Heart left ventricle (tissue), 16 donors: ENCODE measurements at regions of chr15 and their contacts with region 1.

Region 1: GRCh38 chr15:74322181-74323076 is 45.0 kb downstream of the CYP11A1 start:
- DNase-seq: peak; percentile 55 to 83 (median 68)
- ATAC-seq: peak in 3 of 4 donors; percentile 62 to 67 (median 66)
- H3K4me3 ChIP-seq: no peak overlapping the region
- H3K27ac ChIP-seq: no peak overlapping the region
- H3K4me1 ChIP-seq: peaks cover 1 to 31% (median 28%) of the 10 kb centered on the region in 12 donors
- H3K27me3 ChIP-seq: no peaks in the 10 kb centered on the region
- CTCF ChIP-seq: peak; percentile 81 to 90 (median 88)
- POLR2A ChIP-seq: no peak

Region 2: GRCh38 chr15:73972984-73973682 is 349.3 kb before region 1 on chr15:
- intact Hi-C with region 1: loop called in 7 of 10 experiments (anchors 5 to 10 kb)
- DNase-seq: peak; percentile 83 to 90 (median 87)
- ATAC-seq: peak; percentile 85 to 95 (median 92)
- H3K4me3 ChIP-seq: peak overlapping the region in 9 of 12 donors; percentile 12 to 43 (median 32)
- H3K27ac ChIP-seq: peak overlapping the region in 1 of 12 donors; percentile 13
- H3K4me1 ChIP-seq: peaks cover 0 to 12% (median 8%) of the 10 kb centered on the region in 12 donors
- H3K27me3 ChIP-seq: peaks cover 0 to 6% (median 0%) of the 10 kb centered on the region in 9 donors
- CTCF ChIP-seq: peak; percentile 69 to 94 (median 84)
- POLR2A ChIP-seq: no peak

Region 3: DNA sequence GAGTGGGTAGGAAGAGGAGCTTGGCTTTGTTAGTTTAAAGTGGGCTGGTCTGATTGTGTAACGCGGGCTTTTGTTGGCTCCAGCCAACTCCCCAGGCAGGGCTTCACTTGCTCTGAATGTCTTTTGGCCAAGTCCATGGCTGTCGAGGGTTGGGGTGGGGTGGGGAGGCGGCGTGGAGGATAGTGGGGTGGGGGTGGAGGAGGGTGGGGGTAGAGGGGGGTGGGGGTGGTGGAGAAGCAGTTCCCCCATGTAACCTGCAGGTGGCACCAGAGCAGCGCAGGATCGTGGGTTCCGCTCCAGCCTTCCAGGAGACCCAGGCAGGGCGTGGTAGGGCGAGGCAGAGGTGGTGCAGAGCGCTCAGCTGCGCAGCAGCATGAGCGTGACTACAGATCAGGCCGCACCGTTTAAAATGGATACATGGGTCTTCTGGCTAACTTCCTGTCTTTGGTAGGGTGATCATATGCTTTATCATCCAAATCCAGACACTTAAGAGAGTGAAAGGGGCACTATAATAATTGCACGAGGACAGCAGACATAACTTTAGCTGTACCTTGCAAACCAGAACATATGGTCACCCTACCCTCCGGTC is 268.4 kb before region 1 on chr15:
- intact Hi-C with region 1: loop called in 3 of 10 experiments (anchors 5 to 10 kb)
- DNase-seq: peak; percentile 68 to 88 (median 77)
- ATAC-seq: peak; percentile 46 to 85 (median 72)
- H3K4me3 ChIP-seq: peak overlapping the region in 2 of 12 donors; percentile 25 to 32
- H3K27ac ChIP-seq: peak overlapping the region in 3 of 12 donors; percentile 29 to 52 (median 48)
- H3K4me1 ChIP-seq: peaks cover 0 to 38% (median 24%) of the 10 kb centered on the region in 12 donors
- H3K27me3 ChIP-seq: no peaks in the 10 kb centered on the region
- CTCF ChIP-seq: peak; percentile 38 to 84 (median 59)
- POLR2A ChIP-seq: no peak

Region 4: GRCh38 chr15:74127260-74127953 is 195.0 kb before region 1 on chr15:
- intact Hi-C with region 1: loop called (anchors 1 to 5 kb)
- DNase-seq: peak; percentile 89 to 95 (median 91)
- ATAC-seq: peak; percentile 87 to 96 (median 96)
- H3K4me3 ChIP-seq: peak overlapping the region; percentile 13 to 64 (median 50)
- H3K27ac ChIP-seq: peak overlapping the region in 9 of 12 donors; percentile 63 to 88 (median 78)
- H3K4me1 ChIP-seq: peaks cover 0 to 43% (median 21%) of the 10 kb centered on the region in 12 donors
- H3K27me3 ChIP-seq: peaks cover 12 to 84% (median 48%) of the 10 kb centered on the region in 9 donors
- CTCF ChIP-seq: peak; percentile 97 to 100 (median 99)
- POLR2A ChIP-seq: no peak

Region 5: DNA sequence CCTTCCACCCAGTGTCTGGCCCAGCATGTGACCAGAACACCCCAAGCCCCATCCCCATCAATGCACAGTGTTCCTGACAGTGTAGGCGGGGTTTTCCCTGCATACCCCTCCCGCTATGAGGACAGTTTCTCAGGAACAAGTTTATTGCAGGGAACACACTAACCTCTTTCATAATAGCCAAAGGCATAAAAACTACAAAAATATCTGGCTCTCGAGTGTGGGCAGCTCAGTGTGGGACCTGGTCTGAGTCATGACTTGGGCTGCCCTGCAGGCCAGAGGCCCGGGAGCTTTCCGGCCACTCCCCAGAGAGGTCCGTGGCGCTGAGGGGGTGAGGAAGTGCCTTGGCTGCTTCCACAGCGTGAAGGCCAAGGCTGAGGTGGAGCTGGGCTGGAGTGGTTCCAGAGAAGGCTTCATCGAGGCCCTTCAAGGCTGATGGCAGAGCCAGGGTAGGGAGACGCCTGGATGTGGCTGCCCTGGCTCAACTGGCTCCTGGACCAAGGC is 143.0 kb before region 1 on chr15:
- intact Hi-C with region 1: loop called in 2 of 10 experiments (anchors 2 kb)
- DNase-seq: peak; percentile 79 to 90 (median 88)
- ATAC-seq: peak; percentile 73 to 91 (median 88)
- H3K4me3 ChIP-seq: peak overlapping the region in 1 of 12 donors; percentile 9
- H3K27ac ChIP-seq: peak overlapping the region; percentile 28 to 88 (median 68)
- H3K4me1 ChIP-seq: peaks cover 0 to 63% (median 45%) of the 10 kb centered on the region in 12 donors
- H3K27me3 ChIP-seq: no peaks in the 10 kb centered on the region
- CTCF ChIP-seq: no peak
- POLR2A ChIP-seq: no peak

Region 6: DNA sequence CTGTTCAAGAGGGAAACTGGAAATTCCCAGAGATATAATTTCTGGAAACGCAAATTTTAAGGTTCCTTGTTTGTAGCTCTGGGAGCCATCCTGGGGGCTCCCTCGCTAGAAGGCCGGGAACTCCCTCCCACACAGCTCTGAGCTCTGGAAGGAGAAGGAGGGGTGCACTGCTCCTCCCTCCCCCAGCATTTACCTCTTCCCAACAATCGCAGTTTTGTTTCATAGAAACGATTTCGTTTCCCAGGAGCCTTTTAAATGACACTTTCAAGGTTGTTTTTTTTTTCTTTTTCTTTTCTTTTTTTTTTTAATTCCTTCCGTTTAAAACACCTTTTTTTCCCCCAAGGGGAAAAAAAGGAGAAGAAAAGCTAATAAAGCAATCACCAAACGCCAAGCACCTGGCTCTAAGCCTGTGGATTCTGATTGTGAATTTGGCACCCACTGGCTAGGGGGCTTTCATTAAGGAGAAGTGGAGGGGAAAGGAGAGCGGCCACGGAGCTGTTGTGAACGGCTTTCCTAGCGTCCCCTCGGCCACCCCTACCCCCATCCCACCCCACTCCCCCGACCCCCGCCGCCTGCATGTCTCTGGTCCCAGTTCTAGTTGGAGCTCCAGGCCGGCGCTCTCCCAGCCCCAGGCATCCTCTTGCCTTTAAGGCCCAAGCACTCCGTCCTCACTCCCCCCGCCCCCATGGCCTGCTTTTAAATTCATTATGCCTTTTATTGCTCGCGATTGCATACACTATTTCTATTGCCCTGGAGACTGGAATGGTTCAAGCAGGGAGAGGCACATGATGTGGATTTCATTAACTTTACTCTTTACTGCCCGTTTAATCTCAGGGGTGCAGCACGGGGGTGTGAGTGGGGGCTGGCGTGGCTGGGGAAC is 99.9 kb before region 1 on chr15:
- intact Hi-C with region 1: no loop called
- DNase-seq: no peak
- ATAC-seq: no peak
- H3K4me3 ChIP-seq: no peak overlapping the region
- H3K27ac ChIP-seq: no peak overlapping the region
- H3K4me1 ChIP-seq: no peaks in the 10 kb centered on the region
- H3K27me3 ChIP-seq: peaks cover 0 to 6% (median 0%) of the 10 kb centered on the region in 9 donors
- CTCF ChIP-seq: no peak
- POLR2A ChIP-seq: no peak